ENCODE measurements at regions of chr1 and their contacts with region 1.

Region 1: GRCh38 chr1:221203224-221204054 is 324.2 kb downstream of the HLX start:
- DNase-seq: peak; percentile 33 to 69
- ATAC-seq: peak in 2 of 3 donors; percentile 58 to 59
- H3K4me3 ChIP-seq: no peak overlapping the region
- H3K4me3 Mint-ChIP-seq: no peak overlapping the region
- H3K27ac ChIP-seq: no peak overlapping the region
- H3K27ac Mint-ChIP-seq: no peak overlapping the region
- H3K4me1 ChIP-seq: no peaks in the 10 kb centered on the region
- H3K4me1 Mint-ChIP-seq: no peaks in the 10 kb centered on the region
- H3K27me3 ChIP-seq: no peaks in the 10 kb centered on the region
- H3K27me3 Mint-ChIP-seq: no peaks in the 10 kb centered on the region
- CTCF ChIP-seq: peak; percentile 71

Region 2: DNA sequence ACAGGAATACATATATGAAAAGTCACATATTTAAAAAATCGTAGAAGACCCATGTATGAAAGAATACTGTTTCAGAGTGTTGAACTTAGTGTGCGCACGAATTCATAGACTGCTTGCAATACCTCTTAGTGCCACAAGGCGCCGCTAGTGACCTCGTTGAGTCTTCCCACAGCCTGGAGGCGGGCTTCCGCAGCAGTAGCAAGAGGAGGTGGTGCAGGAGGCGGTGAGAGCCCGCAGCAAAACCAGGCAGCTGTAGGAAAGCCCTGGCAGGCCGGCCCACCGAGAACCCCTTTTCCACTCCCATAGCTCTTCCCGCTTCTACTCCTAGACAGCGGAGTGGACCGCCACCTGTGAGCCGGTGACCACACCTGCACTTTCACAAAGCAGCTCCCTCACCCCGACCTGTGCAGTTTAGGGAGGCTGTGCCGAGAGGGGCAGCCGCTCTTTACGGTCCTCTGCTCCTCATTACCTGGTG is 393.2 kb before region 1 on chr1:
- intact Hi-C with region 1: loop called (anchors 10 kb)
- DNase-seq: peak; percentile 58 to 84
- ATAC-seq: peak; percentile 93 to 99 (median 99)
- H3K4me3 ChIP-seq: no peak overlapping the region
- H3K4me3 Mint-ChIP-seq: peak overlapping the region; percentile 61
- H3K27ac ChIP-seq: no peak overlapping the region
- H3K27ac Mint-ChIP-seq: no peak overlapping the region
- H3K4me1 ChIP-seq: no peaks in the 10 kb centered on the region
- H3K4me1 Mint-ChIP-seq: peaks cover 6 to 9% of the 10 kb centered on the region in 2 donors
- H3K27me3 ChIP-seq: no peaks in the 10 kb centered on the region
- H3K27me3 Mint-ChIP-seq: peaks cover 12 to 23% of the 10 kb centered on the region in 2 donors
- CTCF ChIP-seq: peak; percentile 90

Measured in natural killer cell (primary cell).